Activated T-helper 1 cell treated with anti-CD3 and anti-CD28 coated beads, Interleukin-12 subunit alpha, Interleukin-12 subunit beta, Interleukin-2, Interleukin-4 antibody, amounts not matched to agents 30 ng/mL and 10 ng/mL and 1 ng/mL, durations not matched to agents 14 hours and 24 hours and 36 hours (primary cell): ENCODE measurements at regions of chr4 and their contacts with region 1.

Region 1: GRCh38 chr4:48779998-48780742 is at the start of gene FRYL:
- DNase-seq: peak; percentile 96
- H3K4me3 Mint-ChIP-seq: peak within 1 kb of the TSS; percentile 90
- H3K27ac Mint-ChIP-seq: peak within 1 kb of the TSS; percentile 90
- H3K4me1 Mint-ChIP-seq: peaks cover 46% of the 10 kb centered on the region
- H3K27me3 Mint-ChIP-seq: no peaks in the 10 kb centered on the region
- total RNA-seq, gene FRYL: 70.3 and 80.0 TPM in 2 replicates

Region 2: DNA sequence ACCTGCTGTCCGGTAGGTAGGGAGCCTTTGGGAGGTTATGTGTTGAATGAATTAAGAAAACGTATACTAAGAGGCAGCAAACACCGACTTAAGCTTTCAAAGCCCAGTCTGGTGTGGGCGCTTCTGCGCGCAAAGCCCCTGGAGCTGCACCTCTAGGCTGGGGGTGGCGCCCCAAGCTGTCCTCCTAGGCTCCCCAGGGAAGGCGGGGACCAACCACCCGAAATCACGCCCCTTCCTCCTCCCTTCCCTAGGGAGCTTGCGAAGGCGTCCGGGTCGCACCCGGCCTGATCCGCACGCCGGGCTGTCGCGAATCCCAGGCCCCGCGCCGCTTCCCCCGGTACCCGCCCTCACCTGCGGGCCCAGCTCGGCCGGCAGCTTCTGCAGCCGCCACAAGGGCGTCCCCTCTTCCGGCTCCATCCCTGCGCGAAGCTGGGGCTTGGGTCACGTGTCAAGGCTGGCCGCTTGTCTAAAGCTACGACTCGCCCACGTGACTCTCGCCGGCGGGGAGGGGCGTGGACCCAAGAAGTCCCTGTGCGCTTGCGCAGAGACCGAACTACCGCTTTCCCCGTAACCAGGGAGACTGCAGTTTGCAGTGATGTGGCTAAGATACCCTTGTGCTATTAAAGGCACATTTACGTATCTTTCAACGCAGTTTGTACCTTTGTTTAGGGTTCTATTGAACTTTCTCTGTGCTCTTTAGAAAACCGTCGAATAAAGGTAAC is 1316.8 kb before region 1 on chr4 and contains the start of gene COMMD8:
- intact Hi-C with region 1: loop called (anchors 10 kb)
- DNase-seq: peak; percentile 96
- H3K4me3 Mint-ChIP-seq: peak within 1 kb of the TSS; percentile 86
- H3K27ac Mint-ChIP-seq: peak within 1 kb of the TSS; percentile 53
- H3K4me1 Mint-ChIP-seq: peaks cover 32% of the 10 kb centered on the region
- H3K27me3 Mint-ChIP-seq: no peaks in the 10 kb centered on the region
- total RNA-seq, gene COMMD8: 15.8 and 15.9 TPM in 2 replicates

Region 3: DNA sequence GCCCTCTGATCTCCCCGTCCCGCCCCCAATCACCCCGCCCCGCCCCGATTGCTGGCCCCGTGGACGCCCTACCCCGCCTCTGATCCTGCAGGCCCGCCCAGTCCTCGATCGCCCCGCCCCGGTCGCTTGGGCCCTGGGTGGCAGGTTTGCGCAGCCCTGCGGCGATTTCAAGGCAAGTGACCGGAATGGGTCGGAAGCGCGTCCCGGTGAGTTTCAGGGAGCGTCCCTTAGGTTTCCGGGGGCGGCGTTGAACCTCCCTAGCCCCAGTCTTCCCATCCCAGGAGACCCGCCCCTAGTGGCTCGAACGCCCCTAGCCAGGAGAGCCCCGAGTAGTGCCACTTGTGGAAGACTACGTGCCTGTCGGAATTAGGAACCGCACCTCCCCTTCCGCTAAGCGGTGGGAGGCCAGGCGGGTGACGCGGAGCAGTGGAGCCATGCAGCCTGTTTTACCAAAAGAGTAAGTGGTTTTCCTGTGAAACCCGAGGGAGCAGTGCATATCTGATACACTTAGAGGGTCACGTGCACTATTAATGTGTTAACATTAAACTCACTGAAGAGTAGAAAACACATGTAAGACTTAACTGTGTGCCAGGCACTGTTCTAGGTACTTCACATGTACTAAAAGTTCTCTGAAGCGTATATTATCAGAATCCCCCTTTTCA is 510.2 kb before region 1 on chr4:
- intact Hi-C with region 1: loop called (anchors 1 kb)
- DNase-seq: peak; percentile 78
- H3K4me3 Mint-ChIP-seq: peak overlapping the region; percentile 89
- H3K27ac Mint-ChIP-seq: peak overlapping the region; percentile 74
- H3K4me1 Mint-ChIP-seq: peaks cover 16% of the 10 kb centered on the region
- H3K27me3 Mint-ChIP-seq: no peaks in the 10 kb centered on the region

Region 4: GRCh38 chr4:48681856-48682255 is 98.3 kb before region 1 on chr4:
- intact Hi-C with region 1: loop called (anchors 1 kb)
- DNase-seq: no peak
- H3K4me3 Mint-ChIP-seq: no peak overlapping the region
- H3K27ac Mint-ChIP-seq: peak overlapping the region; percentile 66
- H3K4me1 Mint-ChIP-seq: peaks cover 36% of the 10 kb centered on the region
- H3K27me3 Mint-ChIP-seq: no peaks in the 10 kb centered on the region

Region 5: GRCh38 chr4:48739560-48740019 is 40.6 kb before region 1 on chr4:
- intact Hi-C with region 1: loop called (anchors 1 kb)
- DNase-seq: no peak
- H3K4me3 Mint-ChIP-seq: no peak overlapping the region
- H3K27ac Mint-ChIP-seq: no peak overlapping the region
- H3K4me1 Mint-ChIP-seq: peaks cover 48% of the 10 kb centered on the region
- H3K27me3 Mint-ChIP-seq: no peaks in the 10 kb centered on the region

Region 6: GRCh38 chr4:48906206-48907173 is 126.3 kb after region 1 on chr4 and contains the start of gene OCIAD2:
- intact Hi-C with region 1: loop called (anchors 1 kb)
- DNase-seq: peak; percentile 71
- H3K4me3 Mint-ChIP-seq: peak within 1 kb of the TSS; percentile 100
- H3K27ac Mint-ChIP-seq: peak within 1 kb of the TSS; percentile 96
- H3K4me1 Mint-ChIP-seq: peaks cover 53% of the 10 kb centered on the region
- H3K27me3 Mint-ChIP-seq: no peaks in the 10 kb centered on the region
- total RNA-seq, gene OCIAD2: 59.6 and 62.5 TPM in 2 replicates